ENCODE measurements at regions of chr17 and their contacts with region 1.

Region 1: GRCh38 chr17:64320613-64321553 is 57.8 kb upstream of the TEX2 start:
- DNase-seq: peak; percentile 64
- H3K4me3 Mint-ChIP-seq: no peak overlapping the region
- H3K27ac Mint-ChIP-seq: no peak overlapping the region
- H3K4me1 Mint-ChIP-seq: no peaks in the 10 kb centered on the region
- H3K27me3 Mint-ChIP-seq: no peaks in the 10 kb centered on the region

Region 2: DNA sequence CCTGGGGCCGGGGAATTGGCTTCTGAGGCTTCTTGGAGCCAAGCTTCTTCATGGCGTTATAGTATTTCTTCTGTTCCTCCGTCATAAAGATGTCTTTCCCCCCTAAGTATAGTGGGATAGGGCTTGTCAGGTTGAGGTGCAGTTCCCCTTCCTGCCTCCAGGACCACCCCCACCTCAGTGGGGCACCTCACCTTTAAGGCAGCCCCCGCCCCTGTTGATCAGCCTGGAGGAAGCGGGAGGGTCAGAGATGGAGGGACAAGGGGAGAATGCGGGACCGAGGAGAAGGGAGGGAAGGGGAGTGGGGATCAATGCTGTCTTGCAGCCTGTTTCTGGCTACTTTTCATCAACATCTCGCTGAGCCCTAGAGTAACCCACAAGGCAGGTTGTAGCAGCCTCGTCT is 377.1 kb before region 1 on chr17:
- CTCF ChIA-PET with region 1: no interaction called
- POLR2A ChIA-PET with region 1: no interaction called
- intact Hi-C with region 1: no loop called
- DNase-seq: no peak
- H3K4me3 Mint-ChIP-seq: no peak overlapping the region
- H3K27ac Mint-ChIP-seq: peak overlapping the region; percentile 24
- H3K4me1 Mint-ChIP-seq: peaks cover 16% of the 10 kb centered on the region
- H3K27me3 Mint-ChIP-seq: no peaks in the 10 kb centered on the region

Region 3: GRCh38 chr17:63984651-63985386 is 336.1 kb before region 1 on chr17:
- CTCF ChIA-PET with region 1: no interaction called
- POLR2A ChIA-PET with region 1: no interaction called
- intact Hi-C with region 1: no loop called
- DNase-seq: peak; percentile 82
- H3K4me3 Mint-ChIP-seq: peak overlapping the region; percentile 20
- H3K27ac Mint-ChIP-seq: peak overlapping the region; percentile 80
- H3K4me1 Mint-ChIP-seq: peaks cover 18% of the 10 kb centered on the region
- H3K27me3 Mint-ChIP-seq: no peaks in the 10 kb centered on the region

Region 4: DNA sequence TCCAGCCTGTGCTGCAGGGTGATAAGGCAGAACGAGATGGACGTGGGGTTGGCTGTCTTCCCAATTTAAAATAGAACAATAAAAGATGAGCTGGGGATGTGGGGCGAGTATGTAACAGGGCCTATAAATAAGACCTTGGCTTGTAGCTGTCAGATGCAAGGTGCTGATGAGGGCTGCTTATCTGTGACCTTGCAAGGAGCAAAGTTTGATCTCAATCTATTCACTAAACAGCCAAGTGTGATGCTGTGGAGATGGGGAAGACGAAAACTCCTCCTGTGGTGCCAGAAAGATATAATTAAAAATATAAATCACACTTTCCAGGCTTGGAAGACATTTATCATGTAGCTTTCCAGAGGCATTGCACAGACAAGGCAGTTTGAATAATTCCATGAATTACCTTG is 31.1 kb before region 1 on chr17:
- CTCF ChIA-PET with region 1: no interaction called
- POLR2A ChIA-PET with region 1: no interaction called
- intact Hi-C with region 1: no loop called
- DNase-seq: no peak
- H3K4me3 Mint-ChIP-seq: no peak overlapping the region
- H3K27ac Mint-ChIP-seq: no peak overlapping the region
- H3K4me1 Mint-ChIP-seq: no peaks in the 10 kb centered on the region
- H3K27me3 Mint-ChIP-seq: peaks cover 2% of the 10 kb centered on the region

Region 5: DNA sequence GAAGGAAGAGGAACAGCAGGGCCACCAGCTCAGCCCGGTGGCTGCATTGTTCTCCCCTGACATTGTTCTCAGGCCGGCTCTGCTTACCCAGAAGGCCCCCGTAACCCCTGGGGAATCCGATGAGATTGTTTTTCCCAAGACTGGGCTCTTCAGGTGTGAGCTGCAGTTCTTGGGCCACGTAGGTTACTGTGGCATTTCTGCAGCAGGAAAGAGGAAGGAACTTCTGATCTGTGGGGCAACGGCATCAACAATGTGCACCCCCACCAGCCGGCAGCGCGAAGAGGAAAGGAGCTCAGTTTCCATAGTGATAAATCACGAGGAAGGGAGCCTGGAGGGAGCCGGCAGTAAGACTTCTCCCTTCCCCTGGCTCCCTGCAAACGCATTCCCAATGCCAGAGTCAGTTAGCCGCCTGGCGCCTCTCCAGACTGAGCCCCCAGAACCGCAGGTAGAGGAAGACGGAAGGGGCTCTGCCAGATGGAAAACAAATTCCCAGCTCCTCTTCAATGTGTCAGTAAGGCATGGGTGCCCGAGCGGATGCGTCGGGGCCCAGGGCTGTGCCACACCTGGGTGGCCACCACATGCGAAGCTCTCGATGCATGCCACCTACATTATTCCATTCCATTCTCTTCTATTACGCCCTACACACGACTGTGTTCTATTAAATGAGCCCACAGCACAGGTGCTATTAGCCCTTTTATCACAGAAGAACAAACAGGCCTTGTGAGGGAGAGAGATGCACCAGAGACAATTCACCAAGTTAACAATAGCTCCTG is 91.3 kb after region 1 on chr17:
- CTCF ChIA-PET with region 1: interaction called, 230 read pairs
- POLR2A ChIA-PET with region 1: no interaction called
- intact Hi-C with region 1: no loop called
- DNase-seq: no peak
- H3K4me3 Mint-ChIP-seq: no peak overlapping the region
- H3K27ac Mint-ChIP-seq: no peak overlapping the region
- H3K4me1 Mint-ChIP-seq: no peaks in the 10 kb centered on the region
- H3K27me3 Mint-ChIP-seq: no peaks in the 10 kb centered on the region

Region 6: GRCh38 chr17:64491034-64491859 is 170.4 kb after region 1 on chr17:
- CTCF ChIA-PET with region 1: interaction called, 15 read pairs
- POLR2A ChIA-PET with region 1: no interaction called
- intact Hi-C with region 1: no loop called
- DNase-seq: peak; percentile 70
- H3K4me3 Mint-ChIP-seq: no peak overlapping the region
- H3K27ac Mint-ChIP-seq: no peak overlapping the region
- H3K4me1 Mint-ChIP-seq: peaks cover 34% of the 10 kb centered on the region
- H3K27me3 Mint-ChIP-seq: no peaks in the 10 kb centered on the region

Region 7: DNA sequence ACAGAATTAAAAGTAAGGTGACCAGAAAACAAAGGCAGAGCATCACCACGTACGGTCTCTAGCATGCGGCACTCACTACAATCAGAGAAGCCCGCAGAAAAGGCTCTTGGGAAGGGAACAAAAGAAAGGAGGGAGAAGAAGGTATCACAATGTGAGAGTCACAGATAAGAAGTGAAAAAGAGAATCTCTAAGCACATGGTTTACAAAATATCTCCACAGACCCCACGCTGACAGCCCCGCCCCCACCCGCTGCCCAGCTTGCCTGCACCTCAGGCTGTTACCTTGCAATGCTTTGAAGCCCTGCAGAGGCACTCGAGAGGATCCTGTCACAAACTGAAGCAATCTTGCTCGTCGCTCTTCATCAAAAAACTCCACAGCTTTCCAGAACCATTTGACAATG is 226.4 kb after region 1 on chr17:
- CTCF ChIA-PET with region 1: no interaction called
- POLR2A ChIA-PET with region 1: no interaction called
- intact Hi-C with region 1: no loop called
- DNase-seq: no peak
- H3K4me3 Mint-ChIP-seq: no peak overlapping the region
- H3K27ac Mint-ChIP-seq: no peak overlapping the region
- H3K4me1 Mint-ChIP-seq: no peaks in the 10 kb centered on the region
- H3K27me3 Mint-ChIP-seq: no peaks in the 10 kb centered on the region

Measured in activated CD4-positive, alpha-beta memory T cell treated with anti-CD3 and anti-CD28 coated beads for 36 hours (primary cell).